H1 (cell line): ENCODE measurements at regions of chr11 and their contacts with region 1.

Region 1: GRCh38 chr11:119381181-119381988 is at the start of gene USP2:
- DNase-seq: peak in 1 of 2 experiments; percentile 99
- H3K4me3 ChIP-seq: peak within 1 kb of the TSS; percentile 62 to 81 (median 66)
- H3K27ac ChIP-seq: peak within 1 kb of the TSS; percentile 53; the same call in 1 of the 2 replicates
- H3K4me1 ChIP-seq: peaks cover 9 to 35% (median 30%) of the 10 kb centered on the region in 4 experiments
- H3K27me3 ChIP-seq: peaks cover 0 to 12% (median 10%) of the 10 kb centered on the region in 4 experiments; a peak in 6 of 7 replicates
- CTCF ChIP-seq: peak; percentile 76 to 81 (median 79)
- EP300 ChIP-seq: no peak
- POLR2A ChIP-seq: peak in 1 of 2 experiments; percentile 18; a peak in 1 of 3 replicates
- RAD21 ChIP-seq: peak; percentile 51 to 62
- total RNA-seq, gene USP2: 6.9 and 8.5 TPM in 2 replicates

Region 2: DNA sequence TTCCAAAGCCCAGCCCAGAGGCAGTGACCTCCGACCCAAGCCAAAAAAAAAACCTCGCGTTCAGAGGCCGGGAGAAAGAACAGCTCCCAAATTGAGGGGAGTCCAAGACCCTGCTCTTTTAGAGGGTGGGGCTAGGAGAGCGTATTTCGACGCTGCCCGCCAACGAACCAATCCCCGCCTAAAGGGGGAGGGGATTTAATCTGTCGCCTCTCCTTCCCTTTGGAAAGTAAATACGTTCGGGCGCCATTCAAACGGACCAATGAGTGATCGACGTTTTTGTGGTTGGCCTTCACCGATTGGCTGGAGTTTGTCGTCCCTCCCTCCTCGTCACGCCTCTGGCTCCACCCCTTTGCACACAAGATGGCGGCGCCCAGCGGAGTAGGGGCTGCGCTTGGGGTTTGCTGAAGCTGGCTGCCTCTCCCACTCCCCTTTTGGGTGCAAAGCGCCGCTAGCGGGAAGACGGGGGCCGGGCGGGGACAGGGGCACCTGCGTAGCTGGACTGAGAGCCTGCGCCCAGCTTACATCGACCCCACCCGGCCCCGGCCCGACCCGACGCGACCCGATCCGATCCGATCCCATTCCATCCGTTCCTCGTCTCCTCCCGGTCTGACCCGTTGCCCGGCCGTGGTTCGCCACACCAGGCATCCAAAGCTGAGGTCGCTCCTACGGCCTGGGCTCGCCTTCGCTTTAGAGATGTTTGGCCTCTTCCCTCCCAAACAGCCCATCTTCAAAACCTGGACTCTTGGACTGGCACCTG is 47.0 kb before region 1 on chr11 and contains the start of gene RNF26:
- CTCF ChIA-PET with region 1: interaction called, 463 read pairs
- POLR2A ChIA-PET with region 1: interaction called, 7 read pairs
- DNase-seq: peak; percentile 95 to 98
- H3K4me3 ChIP-seq: peak within 1 kb of the TSS; percentile 92 to 96 (median 96)
- H3K27ac ChIP-seq: peak within 1 kb of the TSS; percentile 89
- H3K4me1 ChIP-seq: peaks cover 4 to 24% (median 18%) of the 10 kb centered on the region in 4 experiments
- H3K27me3 ChIP-seq: peaks cover 3 to 8% (median 6%) of the 10 kb centered on the region in 4 experiments; a peak in 6 of 7 replicates
- CTCF ChIP-seq: no peak
- EP300 ChIP-seq: no peak
- POLR2A ChIP-seq: peak in 1 of 2 experiments; percentile 88; a peak in 2 of 3 replicates
- RAD21 ChIP-seq: no peak
- total RNA-seq, gene RNF26: 82.7 and 86.6 TPM in 2 replicates

Region 3: GRCh38 chr11:119368121-119369034 is 13.0 kb before region 1 on chr11:
- CTCF ChIA-PET with region 1: interaction called, 474 read pairs
- POLR2A ChIA-PET with region 1: interaction called, 4 read pairs
- DNase-seq: no peak
- H3K4me3 ChIP-seq: no peak overlapping the region
- H3K27ac ChIP-seq: no peak overlapping the region
- H3K4me1 ChIP-seq: peaks cover 0 to 18% (median 13%) of the 10 kb centered on the region in 4 experiments; a peak in 6 of 7 replicates
- H3K27me3 ChIP-seq: peaks cover 9 to 23% (median 21%) of the 10 kb centered on the region in 4 experiments
- CTCF ChIP-seq: no peak
- EP300 ChIP-seq: no peak
- POLR2A ChIP-seq: no peak
- RAD21 ChIP-seq: no peak

Region 4: GRCh38 chr11:119416606-119417580 is 35.5 kb after region 1 on chr11:
- CTCF ChIA-PET with region 1: interaction called, 19 read pairs
- POLR2A ChIA-PET with region 1: interaction called, 12 read pairs
- DNase-seq: no peak
- H3K4me3 ChIP-seq: no peak overlapping the region
- H3K27ac ChIP-seq: peak overlapping the region; percentile 23; the same call in 1 of the 2 replicates
- H3K4me1 ChIP-seq: peaks cover 6 to 24% (median 21%) of the 10 kb centered on the region in 4 experiments
- H3K27me3 ChIP-seq: no peaks in the 10 kb centered on the region
- CTCF ChIP-seq: peak in 2 of 3 experiments; percentile 20 to 26; a peak in 2 of 4 replicates
- EP300 ChIP-seq: no peak
- POLR2A ChIP-seq: peak; percentile 77 to 85
- RAD21 ChIP-seq: peak in 1 of 2 experiments; percentile 9; a peak in 1 of 4 replicates

Region 5: GRCh38 chr11:119481021-119481666 is 99.8 kb after region 1 on chr11:
- CTCF ChIA-PET with region 1: interaction called, 336 read pairs
- POLR2A ChIA-PET with region 1: interaction called, 3 read pairs
- DNase-seq: peak in 1 of 2 experiments; percentile 100
- H3K4me3 ChIP-seq: peak overlapping the region in 2 of 4 experiments; percentile 19 to 50; a peak in 3 of 8 replicates
- H3K27ac ChIP-seq: no peak overlapping the region
- H3K4me1 ChIP-seq: 0 out of 7 replicates have a peak, but pooled peaks cover 0 to 2% (median 0%) of the 10 kb centered on the region in 4 experiments
- H3K27me3 ChIP-seq: no peaks in the 10 kb centered on the region; a peak in 2 of 7 replicates
- CTCF ChIP-seq: peak; percentile 95 to 98 (median 98)
- EP300 ChIP-seq: no peak
- POLR2A ChIP-seq: no peak
- RAD21 ChIP-seq: peak; percentile 97 to 98